ENCODE measurements at regions of chr10 and their contacts with region 1.

Region 1: GRCh38 chr10:119207367-119207668 is at the start of gene GRK5:
- DNase-seq: peak; percentile 97
- ATAC-seq: peak; percentile 88
- H3K4me3 Mint-ChIP-seq: peak within 1 kb of the TSS; percentile 92
- H3K27ac Mint-ChIP-seq: peak within 1 kb of the TSS; percentile 93
- H3K4me1 Mint-ChIP-seq: peaks cover 38% of the 10 kb centered on the region
- H3K27me3 Mint-ChIP-seq: no peaks in the 10 kb centered on the region
- total RNA-seq, gene GRK5: 21.2 to 24.8 TPM

Region 2: GRCh38 chr10:119080521-119081260 is 126.6 kb before region 1 on chr10 and contains the start of gene EIF3A:
- CTCF ChIA-PET with region 1: no interaction called
- POLR2A ChIA-PET with region 1: no interaction called
- intact Hi-C with region 1: loop called in 1 of 2 experiments (anchors 1 kb)
- DNase-seq: peak; percentile 95
- ATAC-seq: peak; percentile 82
- H3K4me3 Mint-ChIP-seq: peak within 1 kb of the TSS; percentile 99
- H3K27ac Mint-ChIP-seq: peak within 1 kb of the TSS; percentile 94
- H3K4me1 Mint-ChIP-seq: peaks cover 26% of the 10 kb centered on the region
- H3K27me3 Mint-ChIP-seq: no peaks in the 10 kb centered on the region
- total RNA-seq, gene EIF3A: 132 to 150 TPM

Region 3: DNA sequence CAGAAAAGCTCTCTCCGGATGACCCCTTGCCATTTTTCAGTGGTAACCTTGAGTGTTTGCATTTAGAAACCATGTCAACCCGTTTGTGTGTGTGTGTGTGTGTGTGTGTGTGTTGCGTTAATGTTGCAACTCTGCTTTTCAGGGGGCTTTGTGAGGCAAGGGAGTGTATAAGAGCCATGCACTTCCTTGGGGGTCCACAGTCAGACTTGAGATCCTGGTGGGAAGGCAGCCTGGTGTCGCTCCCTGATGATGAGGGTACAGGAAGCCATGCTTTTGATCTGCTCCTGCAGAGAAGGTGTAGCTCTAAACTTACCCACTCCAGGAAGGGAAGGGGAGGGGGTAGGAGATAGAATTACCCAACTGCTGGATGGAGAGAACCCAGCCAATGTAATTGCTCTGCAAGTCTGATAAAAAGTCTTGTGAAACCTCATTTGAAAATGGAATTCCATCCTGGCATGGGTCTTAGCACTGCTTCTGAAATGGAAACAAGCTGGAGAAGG is 10.7 kb after region 1 on chr10:
- CTCF ChIA-PET with region 1: interaction called, 13 read pairs
- POLR2A ChIA-PET with region 1: no interaction called
- intact Hi-C with region 1: no loop called
- DNase-seq: no peak
- ATAC-seq: no peak
- H3K4me3 Mint-ChIP-seq: no peak overlapping the region
- H3K27ac Mint-ChIP-seq: no peak overlapping the region
- H3K4me1 Mint-ChIP-seq: peaks cover 37% of the 10 kb centered on the region
- H3K27me3 Mint-ChIP-seq: no peaks in the 10 kb centered on the region

Region 4: DNA sequence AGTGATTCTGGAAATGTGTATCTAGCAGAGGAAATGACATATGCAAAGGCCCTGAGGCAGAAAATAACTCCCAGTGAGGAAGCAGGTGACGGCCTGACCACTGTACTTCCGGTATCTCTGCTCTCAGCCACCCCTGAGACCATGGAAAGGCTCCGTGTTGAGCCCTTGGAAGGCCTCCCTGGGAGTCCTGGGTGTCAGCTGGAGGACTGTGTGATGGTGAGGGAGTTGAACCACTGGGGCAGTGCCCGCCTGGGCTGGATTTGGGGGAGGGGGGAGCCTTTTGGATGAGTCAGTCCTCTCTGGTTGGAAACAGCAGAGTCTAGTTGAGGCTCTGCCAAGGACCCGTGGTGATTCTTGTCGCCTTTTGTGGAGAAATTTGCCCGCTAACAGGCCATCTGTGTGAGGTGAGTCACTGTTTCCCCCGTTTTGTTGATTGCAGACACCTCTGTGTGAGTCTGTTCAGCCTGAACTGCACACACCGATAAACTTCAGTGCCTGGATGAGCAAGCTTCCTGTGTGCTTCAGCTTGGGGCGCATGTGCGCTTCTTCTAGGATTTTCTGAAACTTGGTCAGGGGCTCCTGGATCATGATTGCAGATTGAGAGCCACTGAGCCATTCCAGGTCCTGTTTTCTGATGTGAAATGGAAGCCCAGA is 98.7 kb after region 1 on chr10:
- CTCF ChIA-PET with region 1: interaction called, 35 read pairs
- POLR2A ChIA-PET with region 1: interaction called, 8 read pairs
- intact Hi-C with region 1: loop called (anchors 1 kb)
- DNase-seq: peak; percentile 93
- ATAC-seq: peak; percentile 73
- H3K4me3 Mint-ChIP-seq: peak overlapping the region; percentile 72
- H3K27ac Mint-ChIP-seq: peak overlapping the region; percentile 100
- H3K4me1 Mint-ChIP-seq: peaks cover 79% of the 10 kb centered on the region
- H3K27me3 Mint-ChIP-seq: peaks cover 2% of the 10 kb centered on the region

Region 5: GRCh38 chr10:119445311-119445934 is 238.1 kb after region 1 on chr10:
- CTCF ChIA-PET with region 1: interaction called, 18 read pairs
- POLR2A ChIA-PET with region 1: no interaction called
- intact Hi-C with region 1: loop called (anchors 1 kb)
- DNase-seq: peak; percentile 93
- ATAC-seq: peak; percentile 90
- H3K4me3 Mint-ChIP-seq: no peak overlapping the region
- H3K27ac Mint-ChIP-seq: no peak overlapping the region
- H3K4me1 Mint-ChIP-seq: peaks cover 6% of the 10 kb centered on the region
- H3K27me3 Mint-ChIP-seq: no peaks in the 10 kb centered on the region

Region 6: GRCh38 chr10:119596537-119597404 is 389.5 kb after region 1 on chr10 and contains the start of gene TIAL1:
- CTCF ChIA-PET with region 1: interaction called, 3 read pairs
- POLR2A ChIA-PET with region 1: no interaction called
- intact Hi-C with region 1: loop called (anchors 1 to 5 kb)
- DNase-seq: peak; percentile 96
- ATAC-seq: peak; percentile 90
- H3K4me3 Mint-ChIP-seq: peak within 1 kb of the TSS; percentile 92
- H3K27ac Mint-ChIP-seq: peak within 1 kb of the TSS; percentile 93
- H3K4me1 Mint-ChIP-seq: peaks cover 49% of the 10 kb centered on the region
- H3K27me3 Mint-ChIP-seq: no peaks in the 10 kb centered on the region
- total RNA-seq, gene TIAL1: 187 to 197 TPM

Region 7: DNA sequence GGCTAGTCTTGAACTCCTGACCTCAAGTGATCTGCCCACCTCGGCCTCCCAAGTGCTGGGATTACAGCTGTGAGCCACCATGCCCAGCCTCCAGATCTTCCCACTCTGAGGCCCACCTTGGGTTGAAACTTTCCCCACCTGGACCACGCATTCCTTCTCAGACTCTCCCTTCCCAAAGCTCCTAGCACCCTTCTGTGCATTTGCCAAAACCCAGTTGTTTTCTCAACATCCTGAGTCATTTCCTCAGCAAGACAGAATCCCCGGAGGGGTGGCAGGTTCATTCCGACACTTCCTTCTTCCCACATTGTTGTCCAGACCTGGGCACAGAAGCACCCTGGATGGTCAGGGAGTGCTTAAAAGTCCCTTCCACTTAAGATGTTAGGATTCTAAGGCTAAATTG is 472.7 kb after region 1 on chr10:
- CTCF ChIA-PET with region 1: no interaction called
- POLR2A ChIA-PET with region 1: no interaction called
- intact Hi-C with region 1: no loop called
- DNase-seq: no peak
- ATAC-seq: no peak
- H3K4me3 Mint-ChIP-seq: no peak overlapping the region
- H3K27ac Mint-ChIP-seq: no peak overlapping the region
- H3K4me1 Mint-ChIP-seq: peaks cover 30% of the 10 kb centered on the region
- H3K27me3 Mint-ChIP-seq: no peaks in the 10 kb centered on the region

Measured in activated CD4-positive, alpha-beta T cell treated with anti-CD3 and anti-CD28 coated beads for 36 hours (primary cell).